AG04449 (cell line): ENCODE measurements at regions of chr1 and their contacts with region 1.

Region 1: DNA sequence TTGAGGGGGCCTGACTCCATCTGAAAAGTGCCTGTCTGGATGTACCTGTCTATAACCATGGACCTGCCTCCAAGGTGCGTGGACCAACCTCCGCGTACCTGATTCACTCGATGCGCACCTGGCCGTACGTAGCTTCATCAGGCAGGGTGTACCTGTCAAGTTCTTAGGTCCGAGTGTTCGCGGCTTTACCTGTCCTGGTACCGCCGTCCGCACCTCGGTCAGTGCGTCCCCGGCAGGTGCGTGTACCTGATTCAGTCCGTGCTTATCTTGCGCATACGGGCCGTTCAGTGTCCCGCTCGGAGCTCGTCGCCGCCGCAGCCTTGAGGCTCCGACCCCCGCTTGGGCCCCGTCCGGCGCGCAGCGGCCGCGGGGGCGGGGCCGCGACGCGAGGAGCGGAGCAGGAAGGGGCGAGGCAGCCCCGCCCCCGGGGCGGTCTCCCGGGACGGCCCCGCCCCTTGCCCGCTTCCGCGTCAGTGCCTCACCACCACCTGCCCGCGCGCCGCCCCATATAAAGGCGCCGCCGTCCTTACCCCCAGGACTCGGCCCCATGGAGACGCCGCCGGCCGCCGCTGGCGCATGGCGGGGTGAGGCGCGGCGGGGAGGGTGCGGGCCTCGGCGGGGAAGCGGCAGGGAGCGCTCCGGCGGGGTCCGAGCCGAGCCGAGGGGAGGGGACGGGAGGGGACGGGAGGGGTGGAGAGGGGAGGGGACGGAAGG is at the start of gene ZC3H12A:
- DNase-seq: no peak
- H3K4me3 ChIP-seq: peak within 1 kb of the TSS; percentile 93
- CTCF ChIP-seq: no peak

Region 2: GRCh38 chr1:37306461-37306860 is 167.7 kb before region 1 on chr1:
- CTCF ChIA-PET with region 1: no interaction called
- POLR2A ChIA-PET with region 1: no interaction called
- DNase-seq: no peak
- H3K4me3 ChIP-seq: no peak overlapping the region
- CTCF ChIP-seq: no peak

Region 3: DNA sequence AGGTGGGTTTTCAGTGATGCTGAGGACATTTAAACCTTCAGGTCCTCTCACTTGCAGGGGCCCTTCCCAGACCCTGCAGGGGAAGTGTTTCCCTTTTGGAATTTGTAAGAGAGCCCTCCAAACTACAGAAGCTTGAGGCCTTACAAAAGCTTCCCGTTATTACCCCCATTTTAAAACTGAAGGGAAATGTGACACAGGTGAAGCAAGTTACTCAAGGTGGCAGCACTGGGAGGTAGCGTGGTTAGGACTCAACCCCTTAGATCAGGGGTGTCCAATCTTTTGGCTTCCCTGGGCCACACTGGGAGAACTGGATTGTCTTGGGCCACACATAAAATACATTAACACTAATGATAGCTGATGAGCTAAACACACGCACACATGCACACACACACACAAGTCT is 15.7 kb before region 1 on chr1:
- CTCF ChIA-PET with region 1: interaction called, 62 read pairs
- POLR2A ChIA-PET with region 1: no interaction called
- DNase-seq: no peak
- H3K4me3 ChIP-seq: no peak overlapping the region
- CTCF ChIP-seq: no peak